ENCODE measurements at regions of chr9 and their contacts with region 1.

Region 1: GRCh38 chr9:14616188-14616982 is 76.8 kb downstream of the ZDHHC21 start:
- DNase-seq: peak in 1 of 35 experiments; percentile 55
- ATAC-seq: peak in 1 of 4 experiments; percentile 54
- H3K4me3 ChIP-seq: no peak overlapping the region
- H3K4me3 Mint-ChIP-seq: no peak overlapping the region
- H3K27ac ChIP-seq: no peak overlapping the region
- H3K27ac Mint-ChIP-seq: no peak overlapping the region
- H3K4me1 ChIP-seq: no peaks in the 10 kb centered on the region
- H3K4me1 Mint-ChIP-seq: no peaks in the 10 kb centered on the region
- H3K27me3 ChIP-seq: no peaks in the 10 kb centered on the region
- H3K27me3 Mint-ChIP-seq: no peaks in the 10 kb centered on the region

Region 2: DNA sequence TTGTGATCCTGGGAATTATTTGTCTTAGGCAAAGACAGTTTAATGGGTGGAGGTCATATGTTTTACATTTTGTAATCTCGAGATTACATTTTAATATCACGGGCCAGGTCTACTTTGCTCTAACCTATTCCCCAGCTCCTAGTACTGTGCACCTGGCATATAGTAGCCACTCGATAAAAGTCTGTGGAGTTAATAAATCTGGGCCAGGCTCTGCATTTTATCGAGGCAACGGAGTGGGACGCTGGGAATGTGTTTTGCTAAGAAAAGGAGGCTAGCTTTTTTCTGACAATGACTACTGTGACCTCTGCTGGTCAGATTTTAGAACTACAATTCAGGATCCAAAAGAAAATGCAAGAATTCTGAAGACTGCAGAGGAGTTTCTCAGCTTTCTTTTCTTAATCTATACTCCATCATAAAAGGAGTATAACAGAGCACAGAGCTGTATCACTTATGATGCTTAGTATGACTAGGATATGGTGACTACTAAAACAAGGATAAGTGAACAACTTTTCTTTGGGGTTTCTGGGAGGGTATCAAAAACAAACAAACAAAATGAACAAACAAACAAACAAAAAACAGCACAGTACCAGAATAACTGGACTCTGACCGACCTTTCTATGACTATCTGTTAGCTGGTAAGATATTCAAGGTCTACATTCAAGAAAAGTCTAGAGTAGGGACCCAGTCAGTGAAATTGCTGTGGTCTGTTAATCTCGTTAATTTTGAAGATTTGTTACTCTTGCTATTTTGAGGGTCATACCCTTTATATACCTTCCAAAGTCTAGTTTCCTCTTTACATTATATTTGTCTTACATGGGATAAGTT is 152.2 kb after region 1 on chr9:
- CTCF ChIA-PET with region 1: interaction called, 6 to 18 read pairs
- POLR2A ChIA-PET with region 1: no interaction called
- DNase-seq: peak in 2 of 35 experiments; percentile 9 to 45
- ATAC-seq: no peak
- H3K4me3 ChIP-seq: no peak overlapping the region
- H3K4me3 Mint-ChIP-seq: no peak overlapping the region
- H3K27ac ChIP-seq: no peak overlapping the region
- H3K27ac Mint-ChIP-seq: no peak overlapping the region
- H3K4me1 ChIP-seq: no peaks in the 10 kb centered on the region
- H3K4me1 Mint-ChIP-seq: no peaks in the 10 kb centered on the region
- H3K27me3 ChIP-seq: no peaks in the 10 kb centered on the region
- H3K27me3 Mint-ChIP-seq: peaks cover 15 to 29% of the 10 kb centered on the region in 2 donors

Measured in T-cell (primary cell).